Body of pancreas (tissue), 4 donors: ENCODE measurements at regions of chr12 and their contacts with region 1.

Region 1: DNA sequence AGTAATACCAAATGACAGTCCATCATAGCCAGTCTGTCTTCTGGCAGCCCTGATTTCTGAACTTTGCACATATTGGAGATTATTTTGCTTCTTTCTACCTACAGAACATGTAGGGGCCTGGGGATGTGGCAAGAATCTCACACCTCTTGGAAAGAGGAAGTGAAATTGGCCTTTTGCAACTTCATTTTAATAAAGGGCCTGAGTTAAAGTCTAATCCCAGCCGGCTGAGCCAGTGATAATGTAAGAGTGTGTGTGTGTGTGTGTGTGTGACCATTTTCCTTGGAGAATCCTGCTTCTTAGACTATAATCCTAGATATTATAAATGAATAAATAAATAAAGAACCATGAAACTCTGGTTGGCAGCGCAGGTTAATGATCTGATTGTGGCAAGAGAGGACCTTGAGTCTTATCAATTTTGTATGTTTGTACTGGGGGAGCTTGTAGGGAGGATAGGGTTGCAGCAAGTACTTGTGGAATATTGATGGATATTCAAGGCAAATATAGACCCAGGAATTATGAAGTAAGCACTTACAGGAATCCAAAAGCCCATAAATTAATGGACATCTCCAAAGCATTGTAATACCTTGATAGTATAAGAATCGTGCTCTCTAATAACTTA is 233.2 kb upstream of the AMIGO2 start:
- DNase-seq: peak in 3 of 4 donors; percentile 21 to 52 (median 44)
- ATAC-seq: peak; percentile 87
- H3K4me3 ChIP-seq: no peak overlapping the region
- H3K27ac ChIP-seq: peak overlapping the region in 3 of 4 donors; percentile 44 to 62 (median 55)
- H3K4me1 ChIP-seq: peaks cover 36% of the 10 kb centered on the region
- H3K27me3 ChIP-seq: no peaks in the 10 kb centered on the region
- CTCF ChIP-seq: no peak
- POLR2A ChIP-seq: no peak

Region 2: DNA sequence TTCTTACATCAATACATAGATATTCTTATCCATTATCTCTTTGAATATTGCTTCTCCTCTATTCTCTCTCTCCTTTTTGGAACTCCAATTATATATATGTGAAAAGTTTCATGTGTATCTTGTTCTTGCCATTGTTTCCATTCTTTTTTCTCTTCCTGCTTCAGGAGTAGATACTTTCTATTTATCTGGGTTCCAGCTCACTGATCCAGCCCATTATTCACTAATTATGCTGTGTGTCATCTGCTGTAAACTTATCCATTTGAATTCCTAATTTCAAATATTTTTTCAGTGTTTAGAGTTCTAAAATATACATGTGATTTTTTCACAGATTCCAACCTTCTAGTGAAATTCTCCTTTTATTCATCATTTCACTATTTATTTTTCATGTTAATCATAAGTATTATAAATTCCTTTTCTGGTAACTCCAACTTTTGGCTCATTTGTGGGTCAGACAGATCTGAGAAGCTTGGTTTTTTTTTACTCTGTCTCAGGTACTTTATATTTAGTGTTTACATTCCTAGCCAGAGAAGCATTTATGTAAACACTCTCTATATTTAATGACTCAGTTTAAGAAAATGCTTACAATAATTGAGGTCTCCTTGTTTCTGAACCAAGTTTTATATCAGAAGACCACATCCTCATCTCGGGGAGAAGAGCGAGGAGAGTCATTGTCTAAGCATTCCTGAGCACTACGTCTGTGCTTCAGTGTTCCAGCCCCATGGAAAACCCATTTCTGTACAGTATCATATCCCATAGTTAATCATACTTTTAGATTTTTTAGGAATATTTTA is 217.3 kb before region 1 on chr12:
- intact Hi-C with region 1: no loop called
- DNase-seq: no peak
- ATAC-seq: no peak
- H3K4me3 ChIP-seq: no peak overlapping the region
- H3K27ac ChIP-seq: no peak overlapping the region
- H3K4me1 ChIP-seq: peaks cover 12% of the 10 kb centered on the region
- H3K27me3 ChIP-seq: no peaks in the 10 kb centered on the region
- CTCF ChIP-seq: no peak
- POLR2A ChIP-seq: no peak

Region 3: DNA sequence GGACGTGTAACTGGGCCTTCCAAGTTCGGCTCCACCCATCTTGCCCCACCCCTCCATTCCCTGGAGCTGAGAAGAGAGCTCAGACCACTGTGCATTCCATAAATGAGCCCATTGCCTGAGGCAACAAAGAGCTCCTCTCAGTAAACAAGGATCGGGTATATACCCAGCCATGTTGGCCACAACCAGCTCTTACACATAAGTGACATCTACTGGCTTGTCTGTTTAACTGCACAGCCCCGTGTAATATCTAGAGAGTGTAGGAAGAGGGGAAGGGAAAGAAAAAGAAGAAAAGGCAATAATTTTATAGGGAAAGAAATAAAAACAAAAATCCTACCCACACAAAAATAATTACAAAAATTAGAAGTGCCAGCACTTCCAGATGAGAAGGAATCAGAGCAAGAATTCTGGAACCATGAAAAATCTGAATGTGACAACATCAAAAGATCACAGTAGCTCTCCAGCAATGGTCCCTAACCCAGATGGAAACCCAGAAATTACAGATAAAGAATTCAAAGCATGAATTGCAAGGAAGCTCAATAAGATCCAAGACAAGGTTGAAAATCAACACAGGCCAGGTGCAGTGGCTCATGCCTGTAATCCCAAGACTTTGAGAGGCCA is 84.9 kb after region 1 on chr12:
- intact Hi-C with region 1: no loop called
- DNase-seq: peak in 1 of 4 donors; percentile 37
- ATAC-seq: peak; percentile 62
- H3K4me3 ChIP-seq: no peak overlapping the region
- H3K27ac ChIP-seq: no peak overlapping the region
- H3K4me1 ChIP-seq: no peaks in the 10 kb centered on the region
- H3K27me3 ChIP-seq: no peaks in the 10 kb centered on the region
- CTCF ChIP-seq: peak in 5 of 7 experiments; percentile 16 to 63 (median 38)
- POLR2A ChIP-seq: no peak

Region 4: DNA sequence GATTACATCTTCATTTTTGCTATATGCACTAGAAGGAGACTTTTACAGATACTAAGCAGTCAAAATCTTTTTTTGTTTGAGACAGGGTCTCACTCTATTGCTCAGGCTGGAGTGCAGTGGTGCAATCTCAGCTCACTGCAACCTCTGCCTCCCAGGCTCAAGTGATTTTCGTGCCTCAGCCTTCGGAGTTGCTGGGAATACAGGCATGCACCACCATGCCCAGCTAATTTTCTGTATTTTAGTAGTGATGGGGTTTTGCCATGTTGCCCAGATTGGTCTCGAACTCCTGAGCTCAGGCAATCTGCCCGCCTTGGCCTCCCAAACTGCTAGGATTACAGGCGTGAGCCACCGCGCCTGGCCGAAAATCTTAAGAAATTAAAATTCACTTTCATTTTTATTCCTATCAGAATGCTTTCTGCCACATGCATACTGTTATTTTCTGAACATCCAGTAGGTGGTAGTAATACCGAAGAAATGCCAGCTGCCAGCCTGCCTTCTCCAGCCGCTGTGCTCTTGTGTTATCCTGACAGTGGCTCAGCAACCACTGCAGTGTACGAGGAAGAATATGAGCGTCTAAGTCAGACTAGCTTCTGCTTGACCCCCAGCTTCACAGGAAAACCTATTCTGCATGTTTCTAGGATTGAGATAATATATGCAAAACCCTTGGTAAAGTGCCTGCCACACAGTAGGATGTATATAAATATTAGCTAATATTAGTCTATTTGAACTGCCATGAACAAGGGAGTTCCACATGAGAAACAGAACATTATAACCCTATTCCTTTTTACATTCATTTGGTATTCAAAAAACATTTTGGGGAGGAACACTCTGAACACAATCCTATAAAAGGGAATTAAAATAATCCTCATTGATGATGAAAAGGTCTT is 338.7 kb after region 1 on chr12:
- intact Hi-C with region 1: loop called (anchors 10 kb)
- DNase-seq: peak; percentile 53 to 74 (median 66)
- ATAC-seq: peak; percentile 92
- H3K4me3 ChIP-seq: no peak overlapping the region
- H3K27ac ChIP-seq: peak overlapping the region in 1 of 4 donors; percentile 31
- H3K4me1 ChIP-seq: peaks cover 19% of the 10 kb centered on the region
- H3K27me3 ChIP-seq: no peaks in the 10 kb centered on the region
- CTCF ChIP-seq: peak; percentile 56 to 89 (median 75)
- POLR2A ChIP-seq: no peak